Endothelial cell of umbilical vein (primary cell): ENCODE measurements at regions of chr5 and their contacts with region 1.

Region 1: DNA sequence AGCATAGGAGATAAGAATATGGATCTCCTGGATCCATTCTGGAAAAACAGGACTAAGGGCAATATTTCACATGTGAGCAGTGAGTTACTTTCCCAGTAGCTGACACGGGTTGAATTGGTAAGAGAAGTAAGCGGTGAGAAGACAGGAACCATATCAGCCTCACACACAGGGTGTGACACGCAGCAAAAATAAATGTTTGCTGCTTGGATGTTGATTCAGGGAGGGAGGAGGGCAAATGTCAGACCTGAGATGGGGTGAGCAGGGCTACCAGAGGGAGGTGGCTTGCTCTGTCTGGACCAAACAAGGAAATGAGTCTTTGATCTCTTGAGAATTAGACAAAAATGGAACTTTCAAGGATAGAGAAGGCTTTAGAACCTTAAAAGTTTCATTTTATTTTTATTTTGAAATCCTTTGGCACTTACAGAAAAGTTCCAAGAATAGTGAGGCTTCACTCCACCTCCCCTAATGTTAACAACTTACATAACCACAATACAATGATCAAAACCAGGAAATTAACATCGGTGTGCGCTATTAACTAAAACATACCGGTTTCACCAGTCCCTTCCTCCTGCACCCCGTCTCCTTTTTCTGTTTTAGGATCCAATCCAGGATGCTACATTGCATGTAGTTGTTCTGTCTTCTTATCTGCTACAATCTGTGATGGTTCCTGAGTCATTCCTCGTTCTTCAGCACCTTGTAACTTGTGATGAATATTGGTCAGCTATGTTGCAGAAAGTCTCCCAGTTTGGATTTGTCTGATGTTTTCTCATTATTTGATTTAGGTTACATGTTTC is 20.6 kb upstream of the ARHGEF28 start:
- DNase-seq: peak; percentile 89
- H3K4me3 ChIP-seq: no peak overlapping the region
- H3K27ac ChIP-seq: peak overlapping the region; percentile 84
- H3K4me1 ChIP-seq: peaks cover 46% of the 10 kb centered on the region
- H3K27me3 ChIP-seq: no peaks in the 10 kb centered on the region
- CTCF ChIP-seq: no peak
- POLR2A ChIP-seq: peak; percentile 58

Region 2: GRCh38 chr5:73625944-73626811 is 20.8 kb after region 1 on chr5 and contains the start of gene ARHGEF28:
- CTCF ChIA-PET with region 1: interaction called, 7 read pairs
- POLR2A ChIA-PET with region 1: interaction called, 3 read pairs
- dilution Hi-C with region 1: no loop called
- intact Hi-C with region 1: loop called (anchors 1 kb)
- DNase-seq: peak; percentile 47
- H3K4me3 ChIP-seq: peak within 1 kb of the TSS; percentile 48 to 83 (median 74)
- H3K27ac ChIP-seq: peak within 1 kb of the TSS; percentile 81
- H3K4me1 ChIP-seq: peaks cover 40% of the 10 kb centered on the region
- H3K27me3 ChIP-seq: no peaks in the 10 kb centered on the region
- CTCF ChIP-seq: no peak
- POLR2A ChIP-seq: peak; percentile 92
- total RNA-seq, gene ARHGEF28: 108 and 116 TPM in 2 replicates

Region 3: DNA sequence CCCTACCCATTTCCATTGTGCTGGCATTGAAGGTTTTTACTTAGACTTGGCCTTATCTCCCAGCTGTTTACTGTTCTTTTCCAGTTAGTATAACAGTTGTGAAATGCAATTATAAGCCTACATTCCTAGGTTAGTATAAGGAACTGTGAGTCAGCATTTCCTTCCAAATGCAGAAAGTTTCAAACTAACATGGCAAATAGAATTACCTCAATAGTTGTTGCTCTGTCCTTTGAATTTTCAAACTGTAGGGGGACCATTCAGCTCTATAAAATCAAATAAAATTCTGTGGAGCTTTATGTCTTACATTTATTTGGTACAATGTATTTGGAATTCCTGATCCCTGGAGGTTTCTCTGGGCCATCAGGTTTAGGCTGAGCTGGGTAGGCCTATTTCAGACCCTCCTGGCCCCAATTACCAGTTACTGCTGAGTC is 67.8 kb after region 1 on chr5:
- CTCF ChIA-PET with region 1: no interaction called
- POLR2A ChIA-PET with region 1: no interaction called
- dilution Hi-C with region 1: no loop called
- intact Hi-C with region 1: loop called (anchors 1 kb)
- DNase-seq: peak; percentile 91
- H3K4me3 ChIP-seq: no peak overlapping the region
- H3K27ac ChIP-seq: peak overlapping the region; percentile 74
- H3K4me1 ChIP-seq: peaks cover 33% of the 10 kb centered on the region
- H3K27me3 ChIP-seq: no peaks in the 10 kb centered on the region
- CTCF ChIP-seq: peak in 1 of 2 donors; percentile 6
- POLR2A ChIP-seq: no peak